WTC11 (cell line): ENCODE measurements at regions of chr1 and their contacts with region 1.

Region 1: GRCh38 chr1:237864338-237865244 is 26.1 kb downstream of the ZP4 start:
- DNase-seq: peak; percentile 86
- ATAC-seq: peak; percentile 87
- H3K4me3 Mint-ChIP-seq: no peak overlapping the region
- H3K27ac Mint-ChIP-seq: no peak overlapping the region
- H3K4me1 Mint-ChIP-seq: peaks cover 28% of the 10 kb centered on the region
- H3K27me3 Mint-ChIP-seq: peaks cover 14% of the 10 kb centered on the region
- CTCF ChIP-seq: peak; percentile 98

Region 2: GRCh38 chr1:237851210-237851845 is 13.3 kb before region 1 on chr1:
- CTCF ChIA-PET with region 1: interaction called, 77 read pairs
- POLR2A ChIA-PET with region 1: no interaction called
- DNase-seq: peak; percentile 81
- ATAC-seq: peak; percentile 88
- H3K4me3 Mint-ChIP-seq: no peak overlapping the region
- H3K27ac Mint-ChIP-seq: no peak overlapping the region
- H3K4me1 Mint-ChIP-seq: peaks cover 17% of the 10 kb centered on the region
- H3K27me3 Mint-ChIP-seq: no peaks in the 10 kb centered on the region
- CTCF ChIP-seq: peak; percentile 78

Region 3: DNA sequence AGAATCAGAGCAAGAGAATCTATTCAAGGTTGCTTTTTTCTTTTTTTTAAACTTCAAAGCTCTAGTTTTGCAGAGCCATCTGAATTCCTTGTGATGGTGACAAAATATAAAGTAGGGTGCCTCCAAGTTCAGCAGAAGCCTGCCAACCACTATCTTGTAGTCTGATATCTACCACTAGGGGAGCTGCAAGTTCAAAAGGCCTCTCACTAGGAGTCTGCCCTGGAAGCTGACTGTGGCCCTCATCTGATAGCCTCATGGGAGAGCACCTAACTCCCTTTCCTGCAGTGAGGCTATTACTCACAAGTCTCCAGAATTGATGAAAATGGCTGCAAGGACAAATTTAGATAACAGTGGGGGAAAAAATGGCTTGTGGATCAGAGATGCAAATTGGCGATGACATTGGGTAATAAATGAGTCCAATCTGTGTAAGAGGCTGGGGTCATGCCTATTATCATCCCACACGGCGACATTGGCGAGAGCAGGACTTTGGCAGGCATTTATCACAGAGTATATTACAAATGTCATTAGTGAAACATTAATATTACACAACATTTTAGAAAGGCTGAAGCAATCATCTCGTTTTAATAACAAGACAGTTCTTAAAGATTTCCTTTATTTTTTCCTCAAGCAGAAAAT is 36.8 kb after region 1 on chr1:
- CTCF ChIA-PET with region 1: interaction called, 13 read pairs
- POLR2A ChIA-PET with region 1: no interaction called
- DNase-seq: peak; percentile 13
- ATAC-seq: peak; percentile 93
- H3K4me3 Mint-ChIP-seq: no peak overlapping the region
- H3K27ac Mint-ChIP-seq: no peak overlapping the region
- H3K4me1 Mint-ChIP-seq: peaks cover 23% of the 10 kb centered on the region
- H3K27me3 Mint-ChIP-seq: no peaks in the 10 kb centered on the region; the same call in 1 of the 2 replicates
- CTCF ChIP-seq: peak; percentile 73

Region 4: DNA sequence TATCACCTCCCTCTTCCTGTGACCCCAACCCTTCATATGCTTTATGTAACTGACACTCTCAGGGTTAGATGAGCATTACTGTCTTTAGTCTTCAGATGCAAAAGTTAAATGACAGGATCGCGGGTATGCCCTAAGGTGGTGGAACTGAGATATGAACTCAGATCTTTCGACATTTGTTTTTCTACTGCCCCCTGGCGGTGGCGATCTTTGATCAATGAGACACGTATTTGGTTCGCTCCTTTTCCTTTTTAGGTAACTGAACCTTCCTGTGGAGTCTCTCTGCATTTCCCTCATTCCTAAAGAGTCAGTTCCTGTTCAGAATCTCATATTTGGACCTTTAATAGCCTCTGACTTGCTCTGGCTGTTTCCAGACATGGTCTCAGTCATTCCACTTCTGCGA is 74.0 kb after region 1 on chr1:
- CTCF ChIA-PET with region 1: interaction called, 76 read pairs
- POLR2A ChIA-PET with region 1: no interaction called
- DNase-seq: peak; percentile 76
- ATAC-seq: peak; percentile 50
- H3K4me3 Mint-ChIP-seq: no peak overlapping the region
- H3K27ac Mint-ChIP-seq: no peak overlapping the region
- H3K4me1 Mint-ChIP-seq: peaks cover 5% of the 10 kb centered on the region
- H3K27me3 Mint-ChIP-seq: no peaks in the 10 kb centered on the region
- CTCF ChIP-seq: peak; percentile 53